SK-MEL-5 (cell line): ENCODE measurements at regions of chr4 and their contacts with region 1.

Region 1: GRCh38 chr4:122758033-122758432 is 25.5 kb downstream of the BBS12 start:
- DNase-seq: peak; percentile 52

Region 2: DNA sequence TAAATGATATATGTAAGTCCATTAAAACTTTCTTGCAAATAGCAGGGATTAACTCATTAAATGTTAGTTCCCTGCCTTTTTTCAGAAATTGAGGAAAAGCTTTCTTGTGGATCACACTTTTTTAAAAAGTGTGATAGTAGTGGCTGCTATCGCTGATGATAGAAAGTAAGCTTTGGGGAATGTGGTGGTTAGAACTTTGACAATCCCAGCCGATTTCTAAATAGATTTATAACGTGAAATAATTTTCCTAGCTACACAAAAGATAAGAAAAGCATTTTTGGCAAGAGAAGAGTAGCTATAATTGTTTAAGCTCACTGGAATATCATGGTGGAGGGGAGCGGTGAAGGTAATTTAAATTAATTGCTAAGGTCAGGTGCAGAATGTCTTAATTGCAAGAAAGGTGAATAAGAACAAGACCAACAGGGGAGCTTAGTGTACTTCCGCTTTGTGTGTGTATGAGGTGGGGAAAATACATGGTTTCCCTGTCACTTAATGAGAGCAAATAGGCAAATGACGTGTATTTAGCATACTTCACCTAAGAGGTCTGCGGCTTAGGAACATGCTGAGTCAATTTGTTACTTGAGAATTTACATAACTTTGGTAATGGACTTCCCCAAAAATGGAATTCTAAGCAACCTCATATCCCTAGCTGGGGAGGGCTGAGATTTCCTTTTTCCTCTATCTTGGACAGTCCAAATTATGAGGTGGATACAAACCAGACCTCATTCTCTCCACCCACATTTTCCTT is 125.5 kb before region 1 on chr4:
- in situ Hi-C with region 1: no loop called
- DNase-seq: no peak

Region 3: DNA sequence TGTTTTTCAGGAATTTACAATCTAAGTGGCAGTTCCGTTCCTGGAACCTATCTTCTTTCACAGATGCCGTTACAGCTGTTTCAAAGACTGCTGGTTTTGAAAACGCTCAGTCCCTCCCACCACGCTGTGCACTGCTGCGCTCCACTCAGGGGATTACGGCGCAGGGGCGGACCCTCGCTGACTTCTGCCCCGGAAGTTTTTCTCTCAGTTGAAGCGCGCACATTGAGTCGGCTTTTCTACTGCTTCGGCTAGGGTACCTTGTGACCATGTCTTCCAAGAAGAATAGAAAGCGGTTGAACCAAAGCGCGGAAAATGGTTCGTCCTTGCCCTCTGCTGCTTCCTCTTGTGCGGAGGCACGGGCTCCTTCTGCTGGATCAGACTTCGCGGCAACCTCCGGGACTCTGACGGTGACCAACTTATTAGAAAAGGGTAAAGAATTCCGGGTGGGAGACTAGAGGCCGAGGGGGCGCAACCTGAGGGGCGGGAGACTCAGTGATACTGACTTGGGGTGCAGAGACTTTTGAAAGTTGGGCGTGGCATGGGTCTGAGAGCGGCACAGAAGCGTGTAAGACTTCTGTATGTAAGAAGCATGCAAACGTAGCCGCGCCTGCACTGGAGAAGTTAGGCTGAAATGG is 165.0 kb after region 1 on chr4:
- in situ Hi-C with region 1: loop called (anchors 25 kb)
- DNase-seq: peak; percentile 87